Adrenal gland (tissue), 19 donors: ENCODE measurements at regions of chr5 and their contacts with region 1.

Region 1: GRCh38 chr5:32489791-32490582 is 45.4 kb upstream of the ZFR start:
- DNase-seq: peak; percentile 71 to 86 (median 78)
- H3K4me3 ChIP-seq: no peak overlapping the region
- H3K27ac ChIP-seq: no peak overlapping the region
- H3K4me1 ChIP-seq: no peaks in the 10 kb centered on the region
- H3K27me3 ChIP-seq: no peaks in the 10 kb centered on the region
- CTCF ChIP-seq: peak; percentile 67 to 83 (median 78)
- POLR2A ChIP-seq: no peak

Region 2: GRCh38 chr5:32585446-32586275 is 95.7 kb after region 1 on chr5 and contains the start of gene SUB1:
- intact Hi-C with region 1: loop called (anchors 5 kb)
- DNase-seq: peak; percentile 91 to 97 (median 95)
- H3K4me3 ChIP-seq: peak within 1 kb of the TSS; percentile 64 to 96 (median 90)
- H3K27ac ChIP-seq: peak within 1 kb of the TSS; percentile 95 to 100 (median 99)
- H3K4me1 ChIP-seq: peaks cover 11 to 38% of the 10 kb centered on the region in 2 donors
- H3K27me3 ChIP-seq: no peaks in the 10 kb centered on the region
- CTCF ChIP-seq: peak in 1 of 6 experiments; percentile 3
- POLR2A ChIP-seq: peak; percentile 54 to 86
- total RNA-seq, gene SUB1: 48.1 to 439 (median 172) TPM

Region 3: DNA sequence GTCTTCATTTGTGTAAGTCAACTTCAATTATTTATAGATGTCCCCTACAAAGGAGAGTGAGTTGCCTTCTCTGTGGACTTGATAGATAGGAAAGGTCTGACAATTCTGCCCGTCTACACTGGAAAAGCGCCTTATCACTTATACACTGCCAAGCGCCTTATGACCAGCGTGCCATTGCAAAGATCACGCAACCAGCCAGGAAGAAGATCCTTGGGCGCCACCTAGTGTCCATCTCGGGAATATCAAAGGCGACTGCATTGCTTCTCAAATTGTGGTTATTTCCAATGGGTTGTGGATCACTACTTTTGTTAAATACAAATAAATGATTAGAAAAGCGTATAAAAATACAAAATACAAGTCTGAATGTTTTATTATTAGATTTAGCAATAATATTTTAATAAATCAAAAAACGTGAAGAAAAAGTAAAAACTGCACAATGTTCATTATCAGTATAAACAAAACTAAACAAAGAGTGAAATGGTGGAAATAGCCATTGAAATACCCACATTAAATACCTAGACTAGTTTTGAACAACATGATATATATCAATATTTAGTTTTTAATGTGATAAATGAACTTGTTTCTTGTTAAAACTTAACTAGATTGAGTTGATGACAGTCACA is 123.2 kb after region 1 on chr5:
- intact Hi-C with region 1: loop called in 1 of 2 experiments (anchors 5 kb)
- DNase-seq: peak; percentile 78 to 96 (median 88)
- H3K4me3 ChIP-seq: no peak overlapping the region
- H3K27ac ChIP-seq: no peak overlapping the region
- H3K4me1 ChIP-seq: peaks cover 0 to 4% of the 10 kb centered on the region in 2 donors
- H3K27me3 ChIP-seq: no peaks in the 10 kb centered on the region
- CTCF ChIP-seq: peak; percentile 87 to 96 (median 91)
- POLR2A ChIP-seq: no peak